AG04450 (cell line): ENCODE measurements at regions of chr7 and their contacts with region 1.

Region 1: DNA sequence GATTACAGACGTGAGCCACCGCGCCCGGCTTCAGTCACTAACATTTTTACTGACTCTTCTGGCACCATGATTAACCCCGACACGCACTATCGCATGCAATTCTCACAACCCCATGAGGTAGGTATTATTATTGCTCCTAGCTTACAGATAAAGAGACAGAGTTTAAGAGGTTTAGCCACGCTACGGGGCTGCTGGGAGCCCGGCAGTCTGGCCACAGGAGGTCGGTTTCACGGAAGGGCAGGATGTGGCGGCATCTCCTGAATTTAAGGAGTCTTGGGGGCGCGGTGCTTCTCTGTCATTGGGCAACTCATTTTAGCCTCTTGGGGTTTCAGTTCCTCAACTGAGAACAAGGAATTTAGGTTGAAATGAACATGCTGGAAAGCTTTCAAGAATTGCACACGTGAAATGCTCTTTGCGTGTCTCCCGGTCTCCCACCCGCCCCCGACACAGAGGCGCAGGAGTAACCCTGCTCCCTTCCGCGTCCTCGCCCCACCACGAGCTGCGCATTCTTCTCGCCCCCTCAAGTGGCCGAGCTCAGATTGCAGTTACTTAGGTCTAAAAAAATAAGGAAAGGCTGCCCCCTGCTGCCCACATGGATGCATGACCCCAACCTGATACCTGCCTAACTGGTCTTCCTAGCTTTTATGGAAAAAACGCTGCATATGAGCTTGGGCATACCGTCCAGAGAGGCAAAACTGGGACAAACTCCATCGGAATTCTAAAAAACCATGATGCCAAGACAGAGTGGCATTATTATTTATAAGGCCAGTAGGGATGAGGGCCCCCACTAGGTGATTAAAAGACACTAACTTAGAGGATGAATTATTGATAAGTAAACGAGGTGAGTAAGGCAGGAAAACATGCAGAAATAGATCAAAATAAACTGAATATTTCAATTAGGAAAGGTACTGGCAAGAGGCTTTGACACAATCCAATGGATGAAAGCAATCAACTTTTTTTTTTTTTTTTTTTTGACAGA is 12.4 kb downstream of the PRSS2 start:
- DNase-seq: peak; percentile 77
- H3K4me3 ChIP-seq: peak overlapping the region; percentile 33
- H3K27ac ChIP-seq: no peak overlapping the region
- H3K27me3 ChIP-seq: peaks cover 7% of the 10 kb centered on the region
- CTCF ChIP-seq: peak; percentile 90

Region 2: DNA sequence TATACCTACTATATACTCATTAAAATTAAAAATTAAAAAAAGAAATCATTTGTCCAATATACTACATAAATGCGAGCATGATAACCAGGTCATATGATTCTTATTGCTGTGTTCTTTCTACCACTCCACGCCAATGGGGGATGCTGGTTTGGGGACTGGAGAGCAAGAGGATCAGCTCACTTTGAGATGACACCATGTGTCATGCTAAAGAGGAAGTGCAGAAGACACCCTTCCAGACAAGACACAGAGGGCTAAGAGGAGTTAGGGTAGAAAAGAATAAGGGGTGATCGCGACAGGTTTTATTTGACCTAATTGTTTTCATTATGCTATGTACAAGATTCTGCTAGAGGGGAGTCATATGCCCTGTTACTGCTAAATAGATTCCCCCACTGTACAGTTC is 705.4 kb before region 1 on chr7:
- CTCF ChIA-PET with region 1: no interaction called
- POLR2A ChIA-PET with region 1: no interaction called
- DNase-seq: no peak
- H3K4me3 ChIP-seq: no peak overlapping the region
- H3K27ac ChIP-seq: no peak overlapping the region
- H3K27me3 ChIP-seq: no peaks in the 10 kb centered on the region
- CTCF ChIP-seq: no peak

Region 3: DNA sequence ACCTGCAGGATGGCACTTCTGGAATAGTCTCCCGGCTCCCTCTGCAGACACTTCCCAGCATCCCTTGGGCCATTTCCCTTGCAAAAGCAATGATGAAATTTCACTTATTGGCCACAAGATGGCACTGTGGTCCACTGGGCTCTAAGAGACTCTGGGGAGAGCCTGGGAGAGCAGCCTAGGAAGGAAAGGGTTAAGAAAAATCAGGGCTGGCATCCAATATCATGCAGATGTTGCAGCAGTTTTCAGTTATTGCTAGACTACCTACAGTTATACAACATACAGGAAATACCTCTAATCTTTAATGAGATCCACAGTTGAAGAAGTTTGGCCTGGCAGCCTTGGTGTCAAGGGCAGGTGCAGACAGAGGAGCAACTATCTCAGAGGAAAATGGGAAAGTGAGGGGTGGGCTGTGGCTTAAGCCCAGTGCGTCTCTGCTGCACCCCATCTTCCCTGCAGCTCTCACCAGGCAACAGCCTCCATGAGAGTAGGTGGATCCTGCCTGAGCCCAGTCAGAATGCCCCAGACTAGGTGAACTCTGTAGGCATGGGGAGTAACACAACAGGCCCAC is 425.2 kb before region 1 on chr7:
- CTCF ChIA-PET with region 1: interaction called, 10 read pairs
- POLR2A ChIA-PET with region 1: no interaction called
- DNase-seq: peak; percentile 54
- H3K4me3 ChIP-seq: no peak overlapping the region
- H3K27ac ChIP-seq: no peak overlapping the region
- H3K27me3 ChIP-seq: no peaks in the 10 kb centered on the region
- CTCF ChIP-seq: peak; percentile 83

Region 4: DNA sequence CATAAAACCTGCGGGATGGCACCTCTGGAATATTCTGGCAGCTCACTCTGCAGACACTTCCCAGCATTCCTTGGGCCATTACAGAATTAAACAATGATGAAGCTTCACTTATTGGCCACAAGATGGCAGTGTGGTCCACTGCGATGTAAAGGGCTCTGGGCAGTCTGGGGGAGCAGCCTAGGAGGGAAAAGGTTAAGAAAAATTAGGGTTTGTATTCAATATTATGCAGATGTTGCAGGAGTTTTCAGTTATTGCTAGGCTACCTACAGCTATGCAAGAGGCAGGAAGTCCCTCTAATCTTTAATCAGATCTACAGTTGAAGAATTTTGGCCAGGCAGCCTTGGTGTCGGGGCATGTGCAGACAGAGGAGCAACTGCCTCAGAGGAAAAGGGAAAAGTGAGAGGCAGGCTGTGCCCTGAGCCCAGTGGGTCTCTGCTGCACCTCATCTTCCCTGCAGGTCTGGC is 267.1 kb before region 1 on chr7:
- CTCF ChIA-PET with region 1: interaction called, 138 read pairs
- POLR2A ChIA-PET with region 1: no interaction called
- DNase-seq: peak; percentile 29
- H3K4me3 ChIP-seq: no peak overlapping the region
- H3K27ac ChIP-seq: no peak overlapping the region
- H3K27me3 ChIP-seq: peaks cover 11% of the 10 kb centered on the region
- CTCF ChIP-seq: peak; percentile 80

Region 5: GRCh38 chr7:142535123-142535779 is 248.0 kb before region 1 on chr7:
- CTCF ChIA-PET with region 1: interaction called, 262 read pairs
- POLR2A ChIA-PET with region 1: interaction called, 3 read pairs
- DNase-seq: peak; percentile 69
- H3K4me3 ChIP-seq: no peak overlapping the region
- H3K27ac ChIP-seq: no peak overlapping the region
- H3K27me3 ChIP-seq: no peaks in the 10 kb centered on the region
- CTCF ChIP-seq: peak; percentile 92

Region 6: DNA sequence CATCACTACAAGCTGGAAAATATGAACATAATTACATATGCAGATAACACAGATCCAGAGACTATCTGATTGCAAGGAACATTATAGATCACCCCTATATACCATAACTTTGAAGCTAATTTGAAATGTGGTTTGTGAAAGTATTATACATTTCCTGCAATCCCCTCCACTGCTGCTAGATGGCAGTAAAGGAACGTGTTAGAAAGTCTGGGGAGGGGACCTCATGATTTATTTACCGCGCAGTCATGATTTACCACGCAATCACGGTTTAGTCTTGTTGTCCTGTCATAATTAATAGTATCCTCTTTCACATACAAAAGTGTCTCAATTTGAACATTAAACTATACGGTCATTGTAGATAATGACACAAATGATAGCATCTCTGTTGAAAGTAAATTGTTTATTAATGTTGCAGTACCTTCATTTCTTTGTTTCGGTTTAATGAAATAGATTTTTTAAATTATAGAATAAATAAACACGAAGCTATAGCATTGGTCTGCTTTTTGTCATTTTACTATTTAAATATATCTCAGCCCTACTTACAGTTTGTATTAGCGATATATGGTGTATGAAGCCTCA is 179.3 kb before region 1 on chr7:
- CTCF ChIA-PET with region 1: interaction called, 68 read pairs
- POLR2A ChIA-PET with region 1: interaction called, 7 read pairs
- DNase-seq: no peak
- H3K4me3 ChIP-seq: no peak overlapping the region; the same call in 1 of the 2 replicates
- H3K27ac ChIP-seq: no peak overlapping the region
- H3K27me3 ChIP-seq: peaks cover 2% of the 10 kb centered on the region
- CTCF ChIP-seq: peak; percentile 87

Region 7: GRCh38 chr7:142632291-142633134 is 150.7 kb before region 1 on chr7:
- CTCF ChIA-PET with region 1: interaction called, 115 read pairs
- POLR2A ChIA-PET with region 1: no interaction called
- DNase-seq: no peak
- H3K4me3 ChIP-seq: no peak overlapping the region
- H3K27ac ChIP-seq: no peak overlapping the region
- H3K27me3 ChIP-seq: peaks cover 2% of the 10 kb centered on the region
- CTCF ChIP-seq: peak; percentile 77

Region 8: DNA sequence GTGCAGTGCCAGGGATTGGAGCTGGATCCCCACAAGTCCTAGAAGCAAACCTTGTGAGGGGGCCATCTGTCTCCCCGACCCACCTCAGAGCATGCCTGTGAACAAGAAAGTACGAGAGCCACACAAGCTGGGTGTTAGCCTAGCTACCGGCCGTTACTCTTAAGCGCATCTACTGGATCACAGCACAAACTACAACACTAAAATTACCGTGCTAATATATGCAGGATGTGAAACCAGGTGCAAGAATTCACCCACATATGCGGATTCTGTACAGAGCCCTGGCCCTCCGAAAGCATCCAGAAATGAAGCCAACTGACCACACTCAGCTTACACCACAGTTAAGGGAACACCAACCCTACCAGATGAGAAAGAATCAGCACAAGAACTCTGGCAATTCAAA is 49.9 kb before region 1 on chr7:
- CTCF ChIA-PET with region 1: no interaction called
- POLR2A ChIA-PET with region 1: no interaction called
- DNase-seq: no peak
- H3K4me3 ChIP-seq: no peak overlapping the region
- H3K27ac ChIP-seq: no peak overlapping the region
- H3K27me3 ChIP-seq: no peaks in the 10 kb centered on the region
- CTCF ChIP-seq: no peak

Region 9: DNA sequence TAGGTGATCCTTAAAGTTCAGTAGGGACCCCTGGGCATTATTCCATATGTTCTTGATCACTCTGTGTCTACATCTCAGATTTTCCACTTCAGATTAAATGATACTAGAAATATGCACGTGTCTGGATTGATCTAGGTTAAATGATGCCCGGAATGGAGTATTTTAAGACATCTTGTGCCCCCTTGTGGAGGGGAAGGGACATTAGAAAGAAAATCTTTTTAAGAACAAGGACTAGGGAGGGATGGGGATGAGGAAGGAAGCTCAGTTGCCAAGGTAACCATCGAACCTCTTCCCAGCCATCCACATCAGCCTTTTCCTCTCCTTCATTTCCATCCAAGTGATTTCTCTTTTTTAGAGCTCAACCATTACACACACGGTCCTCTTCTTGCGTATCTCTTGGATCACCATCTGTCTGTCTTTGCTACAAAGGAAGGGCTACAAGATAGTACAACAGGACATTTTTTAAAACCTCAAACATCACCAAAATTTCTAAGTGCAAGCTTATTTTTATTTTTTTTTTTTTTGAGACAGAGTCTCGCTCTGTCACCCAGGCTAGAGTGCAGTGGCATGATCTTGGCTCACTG is 28.0 kb after region 1 on chr7:
- CTCF ChIA-PET with region 1: interaction called, 23 read pairs
- POLR2A ChIA-PET with region 1: no interaction called
- DNase-seq: peak; percentile 8
- H3K4me3 ChIP-seq: no peak overlapping the region
- H3K27ac ChIP-seq: no peak overlapping the region
- H3K27me3 ChIP-seq: no peaks in the 10 kb centered on the region
- CTCF ChIP-seq: peak; percentile 71

Region 10: DNA sequence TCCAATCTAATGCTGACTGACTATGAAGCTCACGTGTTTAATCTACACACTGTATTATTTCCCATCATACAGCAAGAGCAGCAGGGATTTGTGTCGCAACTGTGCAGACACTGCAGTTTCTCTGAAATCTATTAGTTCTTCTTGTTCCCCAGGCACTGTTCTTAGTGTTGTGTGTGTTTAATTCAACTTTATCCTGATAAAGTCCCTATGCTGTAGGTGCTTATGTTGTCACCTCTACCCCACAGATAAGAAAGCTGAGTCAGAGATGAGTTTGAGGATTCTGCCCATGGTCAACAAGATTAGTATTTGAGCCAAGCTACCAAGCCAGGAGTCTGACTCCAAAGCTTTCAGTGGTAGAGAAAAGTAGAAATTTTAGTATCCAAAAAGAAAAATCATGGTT is 49.2 kb after region 1 on chr7:
- CTCF ChIA-PET with region 1: no interaction called
- POLR2A ChIA-PET with region 1: no interaction called
- DNase-seq: no peak
- H3K4me3 ChIP-seq: no peak overlapping the region
- H3K27ac ChIP-seq: no peak overlapping the region
- H3K27me3 ChIP-seq: no peaks in the 10 kb centered on the region
- CTCF ChIP-seq: no peak

Region 11: GRCh38 chr7:142889816-142890215 is 106.6 kb after region 1 on chr7:
- CTCF ChIA-PET with region 1: no interaction called
- POLR2A ChIA-PET with region 1: no interaction called
- DNase-seq: no peak
- H3K4me3 ChIP-seq: no peak overlapping the region
- H3K27ac ChIP-seq: no peak overlapping the region
- H3K27me3 ChIP-seq: no peaks in the 10 kb centered on the region
- CTCF ChIP-seq: no peak